Endothelial cell of umbilical vein (primary cell): ENCODE measurements at regions of chr1 and their contacts with region 1.

Region 1: GRCh38 chr1:111516005-111516535 is 12.6 kb upstream of the ADORA3 start:
- DNase-seq: peak; percentile 75
- H3K4me3 ChIP-seq: peak overlapping the region in 2 of 3 experiments; percentile 3 to 15
- H3K27ac ChIP-seq: peak overlapping the region; percentile 71
- H3K4me1 ChIP-seq: peaks cover 28% of the 10 kb centered on the region
- H3K27me3 ChIP-seq: no peaks in the 10 kb centered on the region
- CTCF ChIP-seq: peak; percentile 37 to 49
- POLR2A ChIP-seq: no peak

Region 2: DNA sequence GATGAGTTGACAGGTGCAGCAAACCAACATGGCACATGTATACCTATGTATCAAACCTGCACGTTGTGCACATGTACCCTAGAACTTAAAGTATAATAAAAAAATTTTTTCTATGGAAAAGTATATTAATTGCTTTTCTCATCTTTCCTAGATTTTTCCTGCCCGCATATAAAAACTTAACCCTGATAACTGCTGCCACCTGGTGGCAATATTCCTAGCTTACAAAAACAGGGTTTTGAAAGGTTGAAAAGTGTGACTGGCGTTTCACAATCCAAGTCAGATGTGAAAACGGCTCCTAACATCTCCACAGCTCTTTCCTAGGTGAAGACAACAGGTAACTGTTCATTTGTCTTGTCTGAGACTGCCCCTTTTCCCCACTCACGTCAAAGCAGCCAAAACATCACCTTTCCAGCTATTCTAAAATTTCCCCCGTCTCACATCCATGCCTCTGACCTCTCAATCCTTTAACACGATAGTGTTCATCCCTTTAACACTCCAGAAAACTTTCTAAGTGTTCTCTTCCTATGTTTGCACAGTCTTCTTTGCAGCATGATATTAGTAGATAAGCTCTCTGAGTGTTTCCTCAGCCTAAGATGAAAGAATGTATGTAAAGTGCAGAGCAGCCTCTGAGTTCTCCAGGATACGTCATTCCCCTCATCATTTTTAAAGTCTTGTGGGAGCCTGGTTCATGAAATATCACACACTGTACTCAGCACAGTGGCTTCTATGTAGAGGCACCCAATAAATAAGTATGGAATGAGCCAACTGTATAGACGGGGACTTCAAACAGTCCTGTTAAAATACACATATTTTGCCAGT is 116.1 kb before region 1 on chr1:
- CTCF ChIA-PET with region 1: no interaction called
- POLR2A ChIA-PET with region 1: no interaction called
- dilution Hi-C with region 1: no loop called
- intact Hi-C with region 1: no loop called
- DNase-seq: peak; percentile 46
- H3K4me3 ChIP-seq: no peak overlapping the region
- H3K27ac ChIP-seq: no peak overlapping the region
- H3K4me1 ChIP-seq: no peaks in the 10 kb centered on the region
- H3K27me3 ChIP-seq: peaks cover 0 to 12% of the 10 kb centered on the region in 2 experiments
- CTCF ChIP-seq: peak; percentile 41 to 55
- POLR2A ChIP-seq: no peak

Region 3: GRCh38 chr1:111592389-111593361 is 76.6 kb after region 1 on chr1:
- CTCF ChIA-PET with region 1: interaction called, 5 read pairs
- POLR2A ChIA-PET with region 1: no interaction called
- dilution Hi-C with region 1: no loop called
- intact Hi-C with region 1: loop called (anchors 1 kb)
- DNase-seq: peak; percentile 95
- H3K4me3 ChIP-seq: no peak overlapping the region
- H3K27ac ChIP-seq: peak overlapping the region; percentile 16
- H3K4me1 ChIP-seq: peaks cover 15% of the 10 kb centered on the region
- H3K27me3 ChIP-seq: peaks cover 2 to 6% of the 10 kb centered on the region in 2 experiments
- CTCF ChIP-seq: no peak
- POLR2A ChIP-seq: no peak